Astrocyte of the cerebellum (primary cell): ENCODE measurements at regions of chr2 and their contacts with region 1.

Region 1: GRCh38 chr2:70735071-70735470 is 32.9 kb downstream of the ADD2 start:
- DNase-seq: no peak
- H3K4me3 ChIP-seq: no peak overlapping the region
- CTCF ChIP-seq: no peak

Region 2: DNA sequence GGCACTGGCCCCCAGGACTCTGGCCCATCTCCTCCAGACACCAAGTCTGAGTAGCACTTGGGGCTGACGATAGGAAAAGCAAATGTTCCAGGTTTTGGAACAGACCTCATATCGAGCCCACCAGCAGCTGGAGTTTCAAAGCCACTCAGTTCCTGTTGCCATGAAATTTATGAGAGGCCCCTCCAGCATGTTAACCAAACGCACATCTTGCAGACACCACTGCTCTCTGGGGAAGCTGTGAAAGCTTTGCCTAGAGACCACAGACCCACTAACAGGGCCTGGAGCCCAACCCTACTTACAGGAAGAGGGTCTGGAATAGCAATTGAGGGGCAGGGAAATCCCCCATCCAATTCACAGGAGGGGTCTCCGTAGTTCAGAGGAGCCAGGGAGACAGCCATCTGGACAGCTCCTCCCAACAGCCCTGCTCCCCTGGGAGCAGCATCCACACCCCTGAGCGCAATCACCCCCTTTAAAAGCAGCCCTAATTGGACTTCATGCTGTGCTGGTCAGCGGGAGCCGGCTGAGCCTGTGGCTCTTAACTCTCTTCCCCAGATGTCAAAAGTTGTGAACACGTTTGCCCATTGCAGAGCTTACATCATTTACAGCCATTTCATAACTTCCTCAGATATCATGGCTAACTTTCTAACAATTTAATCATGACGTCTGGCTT is 262.7 kb before region 1 on chr2:
- in situ Hi-C with region 1: no loop called
- DNase-seq: no peak
- H3K4me3 ChIP-seq: no peak overlapping the region
- CTCF ChIP-seq: no peak

Region 3: GRCh38 chr2:70698847-70699246 is 36.2 kb before region 1 on chr2:
- in situ Hi-C with region 1: loop called (anchors 5 kb)
- DNase-seq: no peak
- H3K4me3 ChIP-seq: no peak overlapping the region
- CTCF ChIP-seq: no peak

Region 4: GRCh38 chr2:70789304-70790135 is 54.4 kb after region 1 on chr2:
- in situ Hi-C with region 1: loop called (anchors 5 kb)
- DNase-seq: peak; percentile 18
- H3K4me3 ChIP-seq: peak overlapping the region; percentile 4
- CTCF ChIP-seq: peak; percentile 75